A673 (cell line): ENCODE measurements at regions of chr1 and their contacts with region 1.

Region 1: DNA sequence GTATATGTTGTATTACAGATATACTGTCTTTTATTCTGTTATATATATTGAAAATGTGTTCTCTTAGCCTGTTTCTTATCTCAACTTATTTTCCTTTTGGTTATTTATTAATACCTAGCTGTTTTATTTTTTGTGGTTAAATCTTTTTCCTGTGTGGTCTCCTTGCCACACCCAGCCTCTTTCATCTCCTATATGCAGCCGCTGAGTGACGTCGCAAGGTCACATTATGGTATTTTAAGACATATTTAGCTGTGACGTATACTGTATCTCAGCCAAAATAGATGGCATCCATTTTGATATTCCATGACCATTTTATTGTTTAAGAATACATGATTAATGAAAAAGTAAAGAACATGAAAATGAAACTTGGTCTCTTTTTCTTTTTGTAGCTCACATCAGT is 29.1 kb downstream of the CENPF start:
- DNase-seq: no peak
- H3K4me3 ChIP-seq: no peak overlapping the region
- H3K27ac ChIP-seq: no peak overlapping the region
- H3K4me1 ChIP-seq: no peaks in the 10 kb centered on the region
- H3K27me3 ChIP-seq: no peaks in the 10 kb centered on the region
- CTCF ChIP-seq: no peak

Region 2: DNA sequence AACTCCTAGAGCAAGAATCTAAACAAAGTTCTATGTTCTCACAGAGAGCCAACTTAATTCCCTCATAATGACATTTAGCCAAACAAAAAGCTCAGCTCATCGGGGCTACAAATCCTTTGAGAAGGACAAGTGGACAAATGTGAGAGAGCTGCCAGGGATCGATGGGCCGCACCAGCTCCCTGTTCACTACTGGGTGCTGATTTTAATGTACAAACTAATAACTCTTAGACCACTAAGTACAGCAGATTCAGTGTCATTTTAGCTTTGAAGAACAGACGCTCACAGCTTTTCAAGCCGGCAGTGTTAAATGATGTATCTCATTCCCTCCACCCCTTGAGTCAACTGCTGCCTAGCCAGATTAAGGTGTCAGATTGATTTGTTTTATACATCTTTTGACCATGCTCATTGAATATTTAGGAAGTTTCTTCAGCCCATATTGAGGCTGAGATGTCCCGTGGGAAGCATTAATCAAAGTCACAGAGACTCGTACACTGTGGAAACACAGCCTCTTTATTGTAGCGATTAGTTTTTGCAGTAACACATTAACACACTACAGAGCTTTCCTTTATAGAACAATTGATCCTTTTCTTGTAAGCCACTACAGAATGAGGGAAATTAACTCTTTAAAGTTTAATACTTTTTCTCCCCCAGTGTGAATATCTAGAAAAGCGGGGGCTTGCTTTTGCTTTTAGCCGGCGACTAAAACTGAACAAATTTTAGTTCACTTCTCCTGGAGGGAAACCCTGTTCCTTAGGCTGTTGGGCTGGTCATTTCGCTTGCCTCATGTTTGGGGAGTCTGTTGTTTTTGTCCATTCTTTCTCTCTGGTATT is 623.1 kb before region 1 on chr1:
- CTCF ChIA-PET with region 1: no interaction called
- POLR2A ChIA-PET with region 1: no interaction called
- intact Hi-C with region 1: no loop called
- DNase-seq: no peak
- H3K4me3 ChIP-seq: no peak overlapping the region
- H3K27ac ChIP-seq: no peak overlapping the region
- H3K4me1 ChIP-seq: no peaks in the 10 kb centered on the region
- H3K27me3 ChIP-seq: peaks cover 80% of the 10 kb centered on the region
- CTCF ChIP-seq: no peak

Region 3: GRCh38 chr1:214341932-214342331 is 290.2 kb before region 1 on chr1:
- CTCF ChIA-PET with region 1: no interaction called
- POLR2A ChIA-PET with region 1: interaction called, 13 read pairs
- intact Hi-C with region 1: no loop called
- DNase-seq: no peak
- H3K4me3 ChIP-seq: no peak overlapping the region
- H3K27ac ChIP-seq: no peak overlapping the region
- H3K4me1 ChIP-seq: peaks cover 15% of the 10 kb centered on the region
- H3K27me3 ChIP-seq: no peaks in the 10 kb centered on the region
- CTCF ChIP-seq: no peak

Region 4: GRCh38 chr1:215749414-215749813 is 1117.3 kb after region 1 on chr1:
- CTCF ChIA-PET with region 1: no interaction called
- POLR2A ChIA-PET with region 1: no interaction called
- intact Hi-C with region 1: no loop called
- DNase-seq: no peak
- H3K4me3 ChIP-seq: no peak overlapping the region
- H3K27ac ChIP-seq: no peak overlapping the region
- H3K4me1 ChIP-seq: no peaks in the 10 kb centered on the region
- H3K27me3 ChIP-seq: no peaks in the 10 kb centered on the region
- CTCF ChIP-seq: no peak